ENCODE measurements at regions of chr17 and their contacts with region 1.

Region 1: GRCh38 chr17:66348584-66349165 is 46.3 kb downstream of the PRKCA start:
- DNase-seq: no peak
- H3K4me3 ChIP-seq: no peak overlapping the region
- H3K27ac ChIP-seq: no peak overlapping the region
- H3K4me1 ChIP-seq: peaks cover 0 to 30% (median 11%) of the 10 kb centered on the region in 3 donors
- H3K27me3 ChIP-seq: no peaks in the 10 kb centered on the region
- CTCF ChIP-seq: no peak
- POLR2A ChIP-seq: no peak

Region 2: GRCh38 chr17:66397486-66397885 is 48.8 kb after region 1 on chr17:
- intact Hi-C with region 1: loop called (anchors 5 kb)
- DNase-seq: no peak
- H3K4me3 ChIP-seq: no peak overlapping the region
- H3K27ac ChIP-seq: no peak overlapping the region
- H3K4me1 ChIP-seq: no peaks in the 10 kb centered on the region
- H3K27me3 ChIP-seq: no peaks in the 10 kb centered on the region
- CTCF ChIP-seq: no peak
- POLR2A ChIP-seq: no peak

Region 3: DNA sequence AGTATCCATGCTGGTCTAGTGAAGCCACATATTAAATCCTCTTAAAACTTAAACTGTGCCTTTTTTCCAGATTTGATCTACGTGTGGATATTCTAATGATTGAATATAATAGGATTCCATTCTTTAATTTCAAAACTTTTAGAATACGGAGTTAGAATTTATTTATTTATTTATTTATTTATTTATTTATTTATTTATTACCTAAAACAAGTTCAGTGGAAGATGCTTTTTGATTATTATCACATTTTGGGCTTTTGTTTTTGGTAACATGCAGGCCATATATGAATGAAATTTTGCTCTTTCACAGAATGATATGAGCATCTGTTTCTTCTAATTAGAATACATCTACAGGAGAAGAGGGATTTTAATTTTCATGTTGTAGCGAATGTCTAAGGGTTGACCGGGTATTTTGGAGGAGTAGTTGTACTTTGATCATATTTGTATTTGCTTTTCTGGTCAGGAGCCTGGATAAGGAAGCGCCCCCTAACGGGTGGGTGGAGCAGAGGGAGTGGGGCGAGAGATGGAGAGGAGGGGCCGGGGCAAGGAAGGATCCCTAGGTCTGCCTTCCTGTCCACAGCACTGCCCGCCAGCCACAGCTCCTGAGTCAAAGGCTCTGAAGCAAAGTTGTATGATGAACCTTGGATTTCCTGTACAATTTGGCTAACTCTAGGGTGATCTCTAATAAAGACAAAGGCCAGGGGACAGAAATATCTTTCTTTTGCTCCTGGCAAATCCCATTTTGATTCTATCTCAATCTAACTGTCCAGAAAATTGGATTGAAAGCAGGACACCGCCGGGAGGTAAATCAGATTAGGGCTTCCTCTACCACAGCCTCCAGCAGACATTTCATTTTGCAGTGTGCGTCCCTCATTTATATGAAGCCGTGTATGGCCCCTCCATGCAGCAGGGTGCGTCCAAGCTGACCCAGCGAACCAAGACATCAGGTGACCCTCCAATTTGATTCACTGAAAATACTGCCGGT is 102.8 kb after region 1 on chr17:
- intact Hi-C with region 1: no loop called
- DNase-seq: no peak
- H3K4me3 ChIP-seq: no peak overlapping the region
- H3K27ac ChIP-seq: no peak overlapping the region
- H3K4me1 ChIP-seq: peaks cover 0 to 7% (median 0%) of the 10 kb centered on the region in 3 donors
- H3K27me3 ChIP-seq: no peaks in the 10 kb centered on the region
- CTCF ChIP-seq: no peak
- POLR2A ChIP-seq: no peak

Measured in esophagus squamous epithelium (tissue), 5 donors.